CD4-positive, alpha-beta memory T cell (primary cell): ENCODE measurements at regions of chrX and their contacts with region 1.

Region 1: DNA sequence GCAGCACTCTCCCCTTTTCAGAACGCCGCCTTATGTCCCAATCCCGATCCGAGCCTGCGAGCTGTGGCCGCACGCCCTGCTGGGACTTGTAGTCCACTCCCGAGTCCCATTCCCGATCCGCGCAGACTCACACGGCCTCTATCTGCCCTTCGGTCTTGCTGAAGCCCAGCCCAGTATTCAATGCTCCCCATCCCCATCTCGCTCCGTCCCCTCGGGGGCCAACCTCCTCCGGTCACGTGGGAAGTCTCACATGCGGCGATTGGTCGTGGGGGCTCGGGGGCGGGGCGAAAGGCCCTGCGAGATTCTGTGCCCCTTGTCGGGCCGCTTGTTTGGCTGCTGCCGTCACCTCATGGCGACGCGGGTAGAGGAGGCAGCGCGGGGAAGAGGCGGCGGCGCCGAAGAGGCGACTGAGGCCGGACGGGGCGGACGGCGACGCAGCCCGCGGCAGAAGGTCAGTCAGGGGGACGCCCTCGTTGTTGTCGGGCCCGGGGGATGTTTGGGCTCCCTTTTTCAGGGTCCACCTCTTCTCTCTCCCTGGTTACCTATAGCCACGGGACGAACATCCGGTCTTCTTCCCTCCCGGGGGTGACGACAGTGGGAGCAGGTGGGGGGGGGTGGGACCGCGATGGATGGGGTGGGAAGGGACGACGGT is at the start of gene TXLNG:
- DNase-seq: peak; percentile 97 to 99 (median 99)
- H3K4me3 ChIP-seq: peak within 1 kb of the TSS; percentile 63 to 70
- H3K4me3 Mint-ChIP-seq: peak within 1 kb of the TSS; percentile 92 to 96 (median 94)
- H3K27ac ChIP-seq: peak within 1 kb of the TSS; percentile 77
- H3K27ac Mint-ChIP-seq: peak within 1 kb of the TSS; percentile 78 to 96 (median 92)
- H3K4me1 ChIP-seq: peaks cover 12% of the 10 kb centered on the region
- H3K4me1 Mint-ChIP-seq: peaks cover 13 to 36% (median 21%) of the 10 kb centered on the region in 4 donors
- H3K27me3 ChIP-seq: no peaks in the 10 kb centered on the region
- H3K27me3 Mint-ChIP-seq: no peaks in the 10 kb centered on the region
- total RNA-seq, gene TXLNG: 17.8 to 19.8 TPM

Region 2: GRCh38 chrX:15335135-15336022 is 1450.9 kb before region 1 on chrX and contains the start of gene PIGA:
- CTCF ChIA-PET with region 1: no interaction called
- POLR2A ChIA-PET with region 1: no interaction called
- intact Hi-C with region 1: loop called (anchors 2 kb)
- DNase-seq: peak; percentile 87 to 97 (median 93)
- H3K4me3 ChIP-seq: peak within 1 kb of the TSS; percentile 73 to 84
- H3K4me3 Mint-ChIP-seq: peak within 1 kb of the TSS; percentile 90 to 96 (median 91)
- H3K27ac ChIP-seq: peak within 1 kb of the TSS; percentile 89
- H3K27ac Mint-ChIP-seq: peak within 1 kb of the TSS; percentile 95 to 97 (median 96)
- H3K4me1 ChIP-seq: peaks cover 20% of the 10 kb centered on the region
- H3K4me1 Mint-ChIP-seq: peaks cover 4 to 28% (median 8%) of the 10 kb centered on the region in 4 donors
- H3K27me3 ChIP-seq: peaks cover 5% of the 10 kb centered on the region
- H3K27me3 Mint-ChIP-seq: peaks cover 4 to 6% of the 10 kb centered on the region in 2 donors
- total RNA-seq, gene PIGA: 27.8 to 32.3 TPM

Region 3: DNA sequence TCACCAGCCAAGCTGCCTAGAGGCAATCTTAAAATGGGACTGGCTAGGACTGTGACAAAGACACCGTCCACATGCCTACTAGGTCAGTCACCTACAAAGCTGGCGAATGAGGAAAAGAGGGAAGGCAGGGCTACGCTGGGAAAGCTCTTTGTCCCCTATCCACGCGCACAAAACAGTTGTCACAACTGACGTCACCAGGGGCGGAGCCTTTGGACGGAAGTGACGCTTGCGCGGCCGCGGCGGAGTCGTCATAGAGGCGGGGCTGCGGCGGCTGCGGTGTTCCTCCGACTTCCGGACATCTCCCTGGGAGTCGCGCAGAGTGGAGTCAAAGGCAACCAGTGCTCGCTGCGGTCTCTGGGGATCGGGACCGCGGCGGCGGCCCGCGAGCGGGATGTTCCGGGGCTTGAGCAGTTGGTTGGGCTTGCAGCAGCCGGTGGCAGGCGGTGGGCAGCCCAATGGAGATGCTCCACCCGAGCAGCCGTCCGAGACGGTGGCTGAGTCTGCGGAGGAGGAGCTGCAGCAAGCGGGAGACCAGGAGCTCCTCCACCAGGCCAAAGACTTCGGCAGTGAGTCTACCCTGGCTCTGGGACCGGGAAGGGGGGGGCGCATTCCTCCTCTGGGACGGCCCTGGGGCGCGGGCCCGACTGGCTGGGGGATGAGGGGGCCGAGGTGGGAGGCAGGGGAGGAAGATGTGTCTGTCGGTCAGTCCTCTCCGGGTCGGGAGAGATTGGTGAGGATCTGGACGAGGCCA is 66.8 kb before region 1 on chrX and contains the start of gene SYAP1:
- CTCF ChIA-PET with region 1: no interaction called
- POLR2A ChIA-PET with region 1: interaction called, 5 read pairs
- intact Hi-C with region 1: loop called (anchors 1 kb)
- DNase-seq: peak; percentile 91 to 100 (median 97)
- H3K4me3 ChIP-seq: peak within 1 kb of the TSS; percentile 54 to 84
- H3K4me3 Mint-ChIP-seq: peak within 1 kb of the TSS; percentile 89 to 99 (median 95)
- H3K27ac ChIP-seq: peak within 1 kb of the TSS; percentile 95
- H3K27ac Mint-ChIP-seq: peak within 1 kb of the TSS; percentile 99 to 100 (median 99)
- H3K4me1 ChIP-seq: peaks cover 8% of the 10 kb centered on the region
- H3K4me1 Mint-ChIP-seq: peaks cover 13 to 55% (median 37%) of the 10 kb centered on the region in 4 donors
- H3K27me3 ChIP-seq: no peaks in the 10 kb centered on the region
- H3K27me3 Mint-ChIP-seq: no peaks in the 10 kb centered on the region
- total RNA-seq, gene SYAP1: 13.9 to 15.4 TPM

Region 4: GRCh38 chrX:16946361-16946964 is 160.2 kb after region 1 on chrX and contains the start of gene REPS2:
- CTCF ChIA-PET with region 1: no interaction called
- POLR2A ChIA-PET with region 1: no interaction called
- intact Hi-C with region 1: loop called (anchors 1 kb)
- DNase-seq: peak; percentile 67 to 84 (median 73)
- H3K4me3 ChIP-seq: peak within 1 kb of the TSS in 1 of 2 donors; percentile 19
- H3K4me3 Mint-ChIP-seq: peak within 1 kb of the TSS; percentile 79 to 87 (median 86)
- H3K27ac ChIP-seq: no peak within 1 kb of the TSS
- H3K27ac Mint-ChIP-seq: peak within 1 kb of the TSS; percentile 46 to 87 (median 76)
- H3K4me1 ChIP-seq: no peaks in the 10 kb centered on the region
- H3K4me1 Mint-ChIP-seq: peaks cover 0 to 3% (median 0%) of the 10 kb centered on the region in 4 donors
- H3K27me3 ChIP-seq: no peaks in the 10 kb centered on the region
- H3K27me3 Mint-ChIP-seq: peaks cover 0 to 3% of the 10 kb centered on the region in 2 donors
- total RNA-seq, gene REPS2: 0.69 to 1.4 TPM